ENCODE measurements at regions of chr4 and their contacts with region 1.

Region 1: DNA sequence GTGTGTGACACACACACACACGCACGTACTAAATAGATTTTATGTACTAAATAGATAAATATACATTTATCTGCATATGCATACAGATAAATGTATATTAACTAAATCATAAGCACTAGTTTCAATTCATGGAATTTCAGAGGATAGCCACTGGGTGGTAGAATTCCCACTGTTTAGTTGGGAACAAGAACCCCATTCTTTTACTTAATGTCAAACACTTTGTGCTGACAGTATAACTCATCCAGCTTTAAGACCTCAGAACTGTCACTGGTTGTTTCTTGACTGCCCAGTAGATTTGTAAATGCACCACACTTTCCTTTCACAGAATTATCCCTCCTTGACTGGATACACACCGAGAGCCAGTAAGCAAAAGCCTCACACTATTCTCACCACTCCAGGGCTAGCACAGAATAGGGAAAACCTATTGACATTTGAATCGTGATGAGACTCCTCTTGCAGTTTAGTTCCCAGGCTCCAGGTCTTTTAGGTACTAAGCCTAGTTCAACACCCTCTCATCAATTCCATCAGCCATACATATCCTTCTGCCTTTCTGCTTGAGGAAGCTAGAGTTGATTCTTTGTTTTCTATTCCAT is 32.4 kb downstream of the PPARGC1A start:
- DNase-seq: peak; percentile 9
- H3K4me3 ChIP-seq: no peak overlapping the region
- H3K27ac ChIP-seq: no peak overlapping the region
- H3K4me1 ChIP-seq: no peaks in the 10 kb centered on the region
- H3K27me3 ChIP-seq: no peaks in the 10 kb centered on the region
- CTCF ChIP-seq: peak; percentile 9 to 51

Region 2: GRCh38 chr4:23934915-23935314 is 77.5 kb after region 1 on chr4:
- CTCF ChIA-PET with region 1: no interaction called
- dilution Hi-C with region 1: no loop called
- in situ Hi-C with region 1: no loop called
- intact Hi-C with region 1: loop called (anchors 1 kb)
- DNase-seq: peak; percentile 87
- H3K4me3 ChIP-seq: no peak overlapping the region
- H3K27ac ChIP-seq: no peak overlapping the region
- H3K4me1 ChIP-seq: peaks cover 7% of the 10 kb centered on the region
- H3K27me3 ChIP-seq: no peaks in the 10 kb centered on the region
- CTCF ChIP-seq: peak in 1 of 2 donors; percentile 42

Region 3: DNA sequence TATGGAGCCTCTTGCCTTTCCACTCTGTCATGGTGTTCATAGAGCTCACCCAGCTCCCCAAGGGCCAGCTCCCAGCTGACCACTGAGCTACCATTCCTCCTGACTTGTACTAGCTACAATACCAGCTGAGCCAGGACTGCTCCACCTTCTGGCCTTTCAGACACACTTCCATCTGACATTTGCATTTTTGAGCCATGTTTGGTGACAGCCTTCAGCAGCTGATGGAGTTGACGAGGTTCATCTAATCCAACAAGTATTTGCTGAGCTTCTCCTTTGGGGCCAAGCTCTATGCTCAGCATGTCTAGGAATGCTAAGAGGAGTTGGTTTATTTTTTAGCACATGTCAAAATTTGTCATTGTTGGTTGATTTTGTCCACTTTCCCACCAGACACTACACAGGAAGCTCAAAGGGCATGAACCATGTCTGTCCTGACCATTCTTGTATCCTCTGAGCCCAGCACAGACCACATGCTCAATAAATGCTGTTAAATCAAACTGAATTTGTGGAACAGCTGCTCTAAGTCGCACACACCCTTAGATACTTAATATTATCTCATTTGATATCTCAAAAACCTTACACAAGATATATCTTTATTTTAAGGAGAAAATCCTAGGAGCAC is 175.0 kb after region 1 on chr4:
- CTCF ChIA-PET with region 1: interaction called, 5 read pairs
- dilution Hi-C with region 1: no loop called
- in situ Hi-C with region 1: no loop called
- intact Hi-C with region 1: loop called (anchors 1 kb)
- DNase-seq: peak; percentile 3
- H3K4me3 ChIP-seq: no peak overlapping the region
- H3K27ac ChIP-seq: no peak overlapping the region
- H3K4me1 ChIP-seq: no peaks in the 10 kb centered on the region
- H3K27me3 ChIP-seq: no peaks in the 10 kb centered on the region
- CTCF ChIP-seq: peak; percentile 16 to 44